GM10248 (cell line): ENCODE measurements at regions of chr3 and their contacts with region 1.

Region 1: DNA sequence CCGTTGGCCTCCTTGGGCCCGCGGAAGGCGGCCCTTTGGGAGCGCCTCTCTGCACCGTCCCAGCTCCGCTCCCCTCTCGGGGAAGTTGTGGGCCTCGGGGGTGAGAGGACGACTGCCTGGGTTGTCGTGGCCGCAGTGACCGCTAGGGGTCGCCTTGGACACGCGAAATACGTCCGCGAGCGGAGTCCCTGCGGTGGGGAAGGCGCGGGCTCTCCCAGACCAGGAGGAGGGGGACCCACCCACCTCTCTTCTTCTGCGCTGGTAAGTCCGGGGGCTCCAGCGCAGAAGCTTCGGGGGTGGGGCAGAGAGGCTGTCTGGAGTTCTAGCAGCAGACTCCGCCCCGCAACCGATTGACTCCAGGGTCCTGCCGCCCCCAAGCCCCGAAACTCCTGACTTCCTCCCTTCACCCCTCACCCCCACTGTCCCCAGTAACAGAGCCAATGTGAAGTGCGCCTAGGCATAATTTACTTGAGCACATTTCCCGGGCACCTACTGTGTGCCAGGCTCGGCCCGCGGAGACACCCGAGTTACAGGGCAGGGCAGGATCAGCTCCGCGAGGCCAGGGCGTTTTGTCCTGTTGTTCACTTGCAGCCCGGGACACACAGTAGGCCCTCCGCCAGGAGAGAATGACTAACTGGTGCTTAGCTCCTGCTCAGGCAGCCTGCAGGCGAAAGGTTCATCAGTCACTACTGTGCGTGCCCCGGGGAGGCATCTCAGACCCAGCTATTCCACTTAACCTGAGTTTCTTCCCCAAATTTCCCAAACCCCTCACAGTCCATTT is 32.8 kb downstream of the DNASE1L3 start:
- DNase-seq: peak; percentile 89
- CTCF ChIP-seq: peak; percentile 96

Region 2: GRCh38 chr3:57840473-57840872 is 337.5 kb before region 1 on chr3:
- CTCF ChIA-PET with region 1: no interaction called
- POLR2A ChIA-PET with region 1: no interaction called
- DNase-seq: peak; percentile 29
- CTCF ChIP-seq: no peak

Region 3: GRCh38 chr3:58167431-58168351 is 10.2 kb before region 1 on chr3:
- CTCF ChIA-PET with region 1: interaction called, 76 read pairs
- POLR2A ChIA-PET with region 1: no interaction called
- DNase-seq: peak; percentile 83
- CTCF ChIP-seq: peak; percentile 85

Region 4: DNA sequence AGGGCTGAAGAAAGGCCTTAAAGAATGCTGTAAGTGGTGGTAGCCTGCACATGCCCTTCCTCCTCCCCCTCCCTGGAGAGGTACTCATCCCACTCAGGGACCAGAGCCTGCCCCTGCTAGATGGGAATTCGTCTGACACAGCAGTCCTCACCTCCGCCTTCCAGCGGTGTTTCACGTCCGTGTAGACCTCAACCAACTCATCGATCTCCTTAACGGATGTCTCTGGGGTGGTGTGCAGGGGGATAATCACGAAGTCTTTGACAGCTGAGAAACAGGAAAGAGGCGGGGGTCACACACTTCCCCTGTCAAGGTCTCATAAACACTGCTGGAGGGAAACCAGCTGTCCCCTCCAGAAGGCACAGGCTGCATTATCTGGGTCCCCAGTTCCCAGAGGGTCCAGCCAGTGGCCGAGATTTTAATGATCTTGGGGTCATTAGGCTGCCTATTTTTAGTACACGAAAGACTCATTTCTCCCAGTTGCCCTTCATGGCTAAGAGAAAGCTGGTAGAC is 23.0 kb after region 1 on chr3:
- CTCF ChIA-PET with region 1: interaction called, 12 read pairs
- POLR2A ChIA-PET with region 1: no interaction called
- DNase-seq: no peak
- CTCF ChIP-seq: no peak

Region 5: DNA sequence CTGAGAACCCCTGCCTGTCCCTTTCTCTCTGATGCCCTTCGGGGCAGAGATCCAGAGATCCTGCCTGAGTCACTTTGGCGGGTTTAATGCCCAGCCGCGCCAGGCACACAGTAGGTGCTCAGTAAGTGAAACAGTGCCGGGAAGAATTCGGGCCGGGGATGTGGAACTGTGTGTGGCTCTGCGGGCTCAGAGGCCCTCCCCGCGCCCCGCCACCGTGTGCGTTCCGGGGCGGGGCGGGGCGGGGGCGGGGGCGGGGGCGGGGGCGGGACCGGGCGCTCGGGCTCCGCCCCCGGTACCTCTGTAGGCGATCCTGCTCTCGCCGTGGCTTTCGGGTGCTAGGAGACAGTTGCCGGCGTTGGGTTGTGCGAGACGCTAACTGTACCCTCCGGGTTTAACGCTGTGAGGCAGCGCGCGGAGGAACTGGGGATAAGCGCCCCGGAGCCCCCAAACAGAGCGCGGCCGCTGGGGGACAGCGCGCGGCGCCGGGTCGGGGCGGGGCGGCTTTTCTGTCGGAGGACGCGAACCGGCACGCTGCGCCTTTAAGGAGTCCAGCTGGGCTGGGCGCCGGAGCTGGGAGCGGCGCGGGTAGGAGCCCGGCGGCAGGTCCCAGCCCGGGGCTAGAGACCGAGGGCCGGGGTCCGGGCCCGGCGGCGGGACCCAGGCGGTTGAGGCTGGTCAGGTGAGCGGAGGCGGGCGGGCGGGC is 59.5 kb after region 1 on chr3 and contains the start of gene ABHD6:
- CTCF ChIA-PET with region 1: interaction called, 20 read pairs
- POLR2A ChIA-PET with region 1: no interaction called
- DNase-seq: peak; percentile 90
- CTCF ChIP-seq: peak; percentile 51

Region 6: DNA sequence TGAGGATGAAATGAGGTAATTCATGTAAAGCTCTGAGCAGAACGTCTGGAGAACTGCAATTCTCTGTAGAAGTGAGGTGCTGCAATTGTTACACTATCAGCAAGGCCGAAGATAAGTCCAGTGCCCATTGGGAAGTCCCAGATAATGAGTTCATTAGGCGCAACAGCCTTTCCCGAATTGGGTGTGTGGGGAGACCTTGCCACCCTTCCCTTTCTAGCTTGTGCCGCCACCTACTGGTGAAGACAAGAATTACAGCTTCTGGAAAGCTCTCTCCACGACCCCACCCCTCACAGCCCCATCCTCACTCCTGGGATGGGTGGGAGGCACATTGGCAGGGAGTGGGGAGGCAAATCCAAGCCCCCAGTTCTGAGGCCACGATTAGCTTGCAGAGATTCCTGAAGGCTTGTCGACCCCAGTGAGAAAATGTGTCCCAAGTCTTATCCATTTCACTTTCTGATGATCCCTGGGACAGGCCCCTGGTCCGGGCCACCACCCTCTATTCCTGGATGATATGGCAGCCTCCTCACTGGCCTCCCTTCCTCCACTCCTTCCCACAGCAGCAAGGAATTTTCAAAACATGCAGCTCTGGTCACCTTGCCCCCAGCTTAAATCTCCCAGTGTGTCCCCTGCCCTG is 452.3 kb after region 1 on chr3:
- CTCF ChIA-PET with region 1: interaction called, 14 read pairs
- POLR2A ChIA-PET with region 1: no interaction called
- DNase-seq: peak; percentile 68
- CTCF ChIP-seq: peak; percentile 88